CD8-positive, alpha-beta memory T cell (primary cell): ENCODE measurements at regions of chr6 and their contacts with region 1.

Region 1: GRCh38 chr6:52419809-52420670 is at the start of gene EFHC1:
- DNase-seq: peak; percentile 97 to 99 (median 97)
- H3K4me3 ChIP-seq: peak within 1 kb of the TSS; percentile 90
- H3K4me3 Mint-ChIP-seq: no peak within 1 kb of the TSS
- H3K27ac ChIP-seq: peak within 1 kb of the TSS; percentile 85
- H3K27ac Mint-ChIP-seq: peak within 1 kb of the TSS in 2 of 8 donors; percentile 45 to 89
- H3K4me1 ChIP-seq: peaks cover 24% of the 10 kb centered on the region
- H3K4me1 Mint-ChIP-seq: peaks cover 14 to 21% (median 16%) of the 10 kb centered on the region in 3 donors
- H3K27me3 ChIP-seq: no peaks in the 10 kb centered on the region
- H3K27me3 Mint-ChIP-seq: peaks cover 0 to 3% of the 10 kb centered on the region in 2 donors
- total RNA-seq, gene EFHC1: 2.6 to 5.1 TPM

Region 2: GRCh38 chr6:52574709-52575501 is 154.9 kb after region 1 on chr6:
- CTCF ChIA-PET with region 1: interaction called, 10 read pairs
- POLR2A ChIA-PET with region 1: no interaction called
- DNase-seq: peak; percentile 42 to 83 (median 72)
- H3K4me3 ChIP-seq: peak overlapping the region; percentile 82
- H3K4me3 Mint-ChIP-seq: peak overlapping the region; percentile 77 to 95 (median 92)
- H3K27ac ChIP-seq: peak overlapping the region; percentile 34
- H3K27ac Mint-ChIP-seq: peak overlapping the region; percentile 87 to 96 (median 93)
- H3K4me1 ChIP-seq: peaks cover 45% of the 10 kb centered on the region
- H3K4me1 Mint-ChIP-seq: peaks cover 48 to 72% (median 54%) of the 10 kb centered on the region in 3 donors
- H3K27me3 ChIP-seq: no peaks in the 10 kb centered on the region
- H3K27me3 Mint-ChIP-seq: peaks cover 0 to 2% of the 10 kb centered on the region in 2 donors

Region 3: DNA sequence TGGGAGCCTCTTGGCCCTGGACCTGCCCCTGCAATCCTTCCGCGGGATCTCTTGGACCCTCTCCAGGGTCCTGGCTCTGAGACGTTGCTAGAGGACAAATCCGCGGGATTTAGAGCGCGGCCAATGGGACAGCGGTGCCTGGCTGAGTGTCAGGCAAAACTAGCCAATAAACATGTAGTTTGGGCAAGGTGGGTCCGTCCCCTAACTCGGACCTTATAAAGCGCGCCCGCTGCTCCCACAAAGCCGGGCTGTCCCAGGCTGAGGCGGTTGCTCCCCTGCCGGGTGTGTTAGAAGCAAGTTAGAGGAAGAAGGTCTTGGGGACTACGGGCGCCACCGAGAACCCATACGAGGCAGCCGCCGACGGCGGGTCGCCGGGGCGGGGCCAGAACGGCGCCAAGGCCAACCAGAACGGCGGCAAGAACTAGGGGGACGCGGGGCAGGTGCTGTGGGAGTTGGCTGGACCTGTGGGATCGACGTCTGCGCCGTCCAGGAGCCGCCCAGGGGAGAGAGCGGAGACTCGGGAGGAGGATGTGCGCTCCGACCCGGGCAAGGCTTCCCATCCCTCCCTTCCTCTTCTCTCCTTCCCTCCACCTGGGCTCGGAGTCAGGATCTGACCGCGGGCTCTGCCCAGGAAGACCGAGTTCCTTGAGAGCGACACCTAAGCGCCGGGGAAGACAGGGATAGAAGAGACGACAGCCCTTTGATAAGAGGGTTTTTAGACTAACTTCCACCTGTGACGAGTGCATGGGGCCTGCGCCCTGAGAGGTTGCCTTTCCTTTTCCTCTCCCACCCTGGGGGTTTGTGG is 244.3 kb after region 1 on chr6:
- CTCF ChIA-PET with region 1: interaction called, 40 read pairs
- POLR2A ChIA-PET with region 1: no interaction called
- DNase-seq: peak in 4 of 5 donors; percentile 21 to 56 (median 30)
- H3K4me3 ChIP-seq: peak overlapping the region; percentile 72
- H3K4me3 Mint-ChIP-seq: no peak overlapping the region
- H3K27ac ChIP-seq: no peak overlapping the region
- H3K27ac Mint-ChIP-seq: no peak overlapping the region
- H3K4me1 ChIP-seq: peaks cover 4% of the 10 kb centered on the region
- H3K4me1 Mint-ChIP-seq: peaks cover 0 to 3% (median 0%) of the 10 kb centered on the region in 3 donors
- H3K27me3 ChIP-seq: no peaks in the 10 kb centered on the region
- H3K27me3 Mint-ChIP-seq: no peaks in the 10 kb centered on the region